Gastrocnemius medialis (tissue), 4 donors: ENCODE measurements at regions of chr7 and their contacts with region 1.

Region 1: GRCh38 chr7:156473476-156474240 is 166.9 kb upstream of the RNF32 start:
- DNase-seq: no peak
- ATAC-seq: no peak
- H3K4me3 ChIP-seq: no peak overlapping the region
- H3K27ac ChIP-seq: no peak overlapping the region
- H3K4me1 ChIP-seq: no peaks in the 10 kb centered on the region
- H3K27me3 ChIP-seq: peaks cover 0 to 4% (median 0%) of the 10 kb centered on the region in 3 donors
- CTCF ChIP-seq: peak in 2 of 5 experiments; percentile 6 to 30
- POLR2A ChIP-seq: no peak

Region 2: DNA sequence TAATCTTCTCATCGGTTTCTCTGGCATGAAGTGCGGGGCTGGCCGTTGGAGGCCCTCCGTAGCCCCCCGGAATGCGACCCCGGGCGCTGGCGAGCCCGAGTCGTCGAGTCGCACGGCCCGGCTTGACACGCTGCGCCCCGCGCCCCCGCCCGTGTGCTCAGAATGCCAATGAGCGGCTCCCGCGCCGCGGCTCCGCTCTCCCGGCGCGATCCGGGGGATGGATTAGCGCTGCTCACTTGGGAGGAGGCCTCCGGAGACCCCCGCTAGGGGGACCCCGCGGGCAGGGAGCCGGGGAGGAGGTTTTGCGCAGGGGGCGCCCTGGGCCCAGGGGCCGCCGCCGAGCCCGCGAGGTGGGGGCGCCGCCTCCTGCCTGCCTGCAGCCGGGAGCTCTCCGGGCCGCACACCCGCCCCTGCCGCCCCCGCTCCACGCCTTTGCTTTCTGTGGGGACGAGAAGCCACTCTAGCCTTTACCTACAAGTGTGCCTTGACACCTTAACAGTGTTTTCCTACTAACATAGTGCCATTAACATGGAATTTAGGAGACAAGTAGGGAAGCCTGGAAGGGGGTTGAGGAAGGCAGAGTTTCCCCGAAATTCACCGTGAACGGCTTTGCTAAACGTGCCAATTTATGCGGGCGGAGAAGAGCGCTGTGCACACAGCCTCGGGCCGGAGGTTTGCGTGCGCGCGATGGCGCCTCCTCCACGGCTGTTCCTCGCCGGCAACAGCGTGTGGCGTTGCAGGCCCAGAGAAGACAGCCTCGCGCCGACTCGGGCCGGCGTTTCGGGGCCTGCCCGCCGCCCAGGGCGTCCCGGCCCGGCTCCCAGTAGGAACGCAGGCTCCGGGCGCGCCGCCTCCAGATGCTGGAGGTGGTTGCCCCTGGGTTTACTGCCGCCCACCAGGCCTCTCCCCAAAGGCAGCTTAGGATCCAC is 668.5 kb before region 1 on chr7:
- in situ Hi-C with region 1: loop called in 1 of 4 experiments (anchors 25 kb)
- intact Hi-C with region 1: loop called (anchors 2 kb)
- DNase-seq: no peak
- ATAC-seq: peak in 1 of 2 donors; percentile 66
- H3K4me3 ChIP-seq: peak overlapping the region; percentile 12 to 54 (median 41)
- H3K27ac ChIP-seq: no peak overlapping the region
- H3K4me1 ChIP-seq: peaks cover 16 to 31% of the 10 kb centered on the region in 2 donors
- H3K27me3 ChIP-seq: peaks cover 79 to 90% (median 82%) of the 10 kb centered on the region in 3 donors
- CTCF ChIP-seq: peak in 2 of 5 experiments; percentile 15 to 18
- POLR2A ChIP-seq: no peak

Region 3: GRCh38 chr7:155815332-155816191 is 658.1 kb before region 1 on chr7:
- in situ Hi-C with region 1: loop called in 1 of 4 experiments (anchors 25 kb)
- intact Hi-C with region 1: no loop called
- DNase-seq: no peak
- ATAC-seq: no peak
- H3K4me3 ChIP-seq: no peak overlapping the region
- H3K27ac ChIP-seq: no peak overlapping the region
- H3K4me1 ChIP-seq: peaks cover 0 to 8% of the 10 kb centered on the region in 2 donors
- H3K27me3 ChIP-seq: peaks cover 41 to 56% (median 55%) of the 10 kb centered on the region in 3 donors
- CTCF ChIP-seq: peak in 1 of 5 experiments; percentile 21
- POLR2A ChIP-seq: no peak

Region 4: DNA sequence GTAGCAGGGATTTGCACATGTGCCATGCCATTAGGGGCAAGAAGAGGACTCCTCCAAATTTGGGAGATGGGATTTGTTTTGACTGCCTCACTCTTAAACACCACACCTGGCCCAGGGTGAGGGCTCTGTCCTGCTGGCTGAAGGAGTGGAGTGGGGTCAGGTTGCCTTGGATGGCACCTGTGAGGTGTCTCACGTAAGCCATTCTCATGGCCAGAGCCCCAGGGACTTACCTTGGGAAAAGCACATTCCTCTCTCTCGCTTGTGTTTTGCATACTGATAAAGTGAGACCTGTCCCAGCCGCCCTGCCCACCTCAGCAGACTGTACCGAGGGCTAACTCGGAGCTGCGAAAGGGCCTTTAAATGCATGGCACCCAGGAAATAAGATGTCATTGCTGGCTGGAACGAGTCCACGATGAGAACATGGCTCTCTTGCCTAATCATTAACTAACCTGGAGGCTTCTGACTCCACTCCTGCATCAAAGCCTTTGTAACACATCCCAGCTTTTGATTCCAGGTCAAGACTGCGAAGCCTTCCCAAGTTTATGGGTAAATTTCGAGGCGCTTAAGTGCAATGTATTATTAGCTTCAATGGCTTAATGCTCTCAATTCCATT is 17.0 kb before region 1 on chr7:
- in situ Hi-C with region 1: no loop called
- intact Hi-C with region 1: no loop called
- DNase-seq: no peak
- ATAC-seq: no peak
- H3K4me3 ChIP-seq: no peak overlapping the region
- H3K27ac ChIP-seq: no peak overlapping the region
- H3K4me1 ChIP-seq: no peaks in the 10 kb centered on the region
- H3K27me3 ChIP-seq: peaks cover 0 to 5% (median 0%) of the 10 kb centered on the region in 3 donors
- CTCF ChIP-seq: no peak
- POLR2A ChIP-seq: no peak